Right cardiac atrium (tissue), 5 donors: ENCODE measurements at regions of chr17 and their contacts with region 1.

Region 1: GRCh38 chr17:8118769-8119580 is 661 bp upstream of the ALOXE3 start:
- DNase-seq: peak; percentile 89 to 97 (median 95)
- ATAC-seq: peak; percentile 82 to 88
- H3K4me3 ChIP-seq: peak overlapping the region; percentile 57
- H3K27ac ChIP-seq: peak overlapping the region; percentile 25
- H3K4me1 ChIP-seq: no peaks in the 10 kb centered on the region
- H3K27me3 ChIP-seq: no peaks in the 10 kb centered on the region

Region 2: GRCh38 chr17:7186241-7186640 is 932.7 kb before region 1 on chr17:
- intact Hi-C with region 1: no loop called
- DNase-seq: peak in 1 of 3 donors; percentile 42
- ATAC-seq: peak; percentile 11 to 17
- H3K4me3 ChIP-seq: no peak overlapping the region
- H3K27ac ChIP-seq: no peak overlapping the region
- H3K4me1 ChIP-seq: no peaks in the 10 kb centered on the region
- H3K27me3 ChIP-seq: no peaks in the 10 kb centered on the region

Region 3: GRCh38 chr17:8079291-8080207 is 39.4 kb before region 1 on chr17:
- intact Hi-C with region 1: loop called in 1 of 4 experiments (anchors 5 kb)
- DNase-seq: peak; percentile 71 to 91 (median 85)
- ATAC-seq: peak; percentile 84 to 89
- H3K4me3 ChIP-seq: peak overlapping the region; percentile 2
- H3K27ac ChIP-seq: no peak overlapping the region
- H3K4me1 ChIP-seq: no peaks in the 10 kb centered on the region
- H3K27me3 ChIP-seq: no peaks in the 10 kb centered on the region

Region 4: GRCh38 chr17:8173056-8173870 is 54.3 kb after region 1 on chr17:
- intact Hi-C with region 1: loop called in 1 of 4 experiments (anchors 10 kb)
- DNase-seq: peak; percentile 68 to 84 (median 71)
- ATAC-seq: peak; percentile 88 to 89
- H3K4me3 ChIP-seq: peak overlapping the region; percentile 63
- H3K27ac ChIP-seq: peak overlapping the region; percentile 95
- H3K4me1 ChIP-seq: peaks cover 6% of the 10 kb centered on the region
- H3K27me3 ChIP-seq: no peaks in the 10 kb centered on the region

Region 5: DNA sequence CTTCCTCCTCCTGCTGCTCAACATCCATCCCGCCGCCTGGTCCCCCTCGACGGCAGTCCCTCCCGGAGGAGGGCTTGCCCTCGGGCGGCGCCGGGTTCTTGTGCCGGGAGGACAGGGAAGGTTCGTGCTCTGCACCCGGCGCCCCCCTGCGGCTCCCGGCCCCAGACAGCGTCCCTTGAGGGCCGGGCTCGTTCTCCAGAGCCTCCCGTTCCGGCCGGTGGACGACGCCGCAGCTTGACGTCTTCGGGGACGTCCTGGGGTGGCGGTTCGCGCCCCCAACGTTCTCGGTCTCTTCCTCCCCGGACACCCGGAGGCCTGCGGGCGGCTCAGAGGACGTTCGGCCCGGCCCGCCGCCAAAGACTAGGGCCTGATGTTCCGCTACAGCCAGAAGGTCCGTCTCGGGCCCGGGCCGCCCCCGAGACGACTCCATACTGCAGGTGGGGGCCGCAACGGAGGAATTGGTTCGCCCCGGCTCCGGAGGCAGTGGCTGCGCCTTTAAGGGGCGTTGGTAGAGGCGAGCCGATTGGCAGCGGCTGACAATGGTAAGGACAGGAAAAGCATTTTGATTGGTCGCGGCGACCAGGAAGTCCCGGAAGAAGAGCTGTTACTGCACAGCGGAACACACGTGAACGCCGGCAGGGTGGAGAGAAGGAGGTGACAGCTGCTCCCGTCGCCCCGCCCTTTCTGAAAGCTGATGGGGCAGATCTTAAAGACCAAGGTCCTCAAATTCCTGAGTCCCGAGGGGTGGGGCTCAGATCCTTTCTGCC is 70.9 kb after region 1 on chr17 and contains the start of gene BORCS6:
- intact Hi-C with region 1: loop called in 3 of 4 experiments (anchors 2 to 10 kb)
- DNase-seq: peak; percentile 98 to 99 (median 99)
- ATAC-seq: peak; percentile 78 to 80
- H3K4me3 ChIP-seq: peak within 1 kb of the TSS; percentile 71
- H3K27ac ChIP-seq: peak within 1 kb of the TSS; percentile 98
- H3K4me1 ChIP-seq: peaks cover 9% of the 10 kb centered on the region
- H3K27me3 ChIP-seq: no peaks in the 10 kb centered on the region
- total RNA-seq, gene BORCS6: 7.0 to 9.9 (median 9.6) TPM

Region 6: DNA sequence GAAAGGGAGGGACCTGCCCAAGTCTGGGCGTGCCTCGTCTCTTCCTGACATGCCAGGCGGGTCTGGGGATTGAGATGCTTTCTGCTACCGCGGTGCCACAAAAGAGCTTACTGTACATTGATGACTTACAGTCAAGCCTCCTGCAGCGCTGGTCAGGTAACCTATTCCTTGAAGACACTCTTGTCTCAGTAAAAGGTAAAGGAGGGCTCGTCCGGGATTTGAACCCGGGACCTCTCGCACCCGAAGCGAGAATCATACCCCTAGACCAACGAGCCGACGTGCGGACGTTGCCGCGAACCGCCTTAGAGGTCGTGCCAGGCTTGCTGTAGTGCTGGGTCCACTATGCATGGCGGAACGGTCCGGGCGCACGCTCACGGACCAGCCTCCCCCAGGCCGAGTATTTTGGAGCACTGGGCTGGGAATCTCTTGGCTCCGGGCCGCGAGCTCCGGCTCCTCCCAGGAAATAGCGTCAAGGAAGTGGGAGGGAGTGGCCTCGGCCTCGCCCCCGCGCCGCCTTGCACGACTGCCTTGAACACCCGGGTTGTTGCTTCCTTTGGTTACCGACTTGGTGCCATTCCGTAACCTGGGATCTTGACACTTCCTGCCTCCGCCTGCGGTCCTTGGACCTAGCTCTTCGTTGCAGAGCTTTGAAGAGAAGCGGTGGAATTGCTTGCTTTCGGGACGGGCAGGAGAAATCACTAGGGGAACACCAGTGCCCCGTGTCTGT is 103.8 kb after region 1 on chr17:
- intact Hi-C with region 1: loop called in 3 of 4 experiments (anchors 10 kb)
- DNase-seq: peak; percentile 96 to 98 (median 98)
- ATAC-seq: peak; percentile 78 to 79
- H3K4me3 ChIP-seq: peak overlapping the region; percentile 73
- H3K27ac ChIP-seq: peak overlapping the region; percentile 99
- H3K4me1 ChIP-seq: peaks cover 5% of the 10 kb centered on the region
- H3K27me3 ChIP-seq: no peaks in the 10 kb centered on the region